Activated CD8-positive, alpha-beta memory T cell treated with anti-CD3 and anti-CD28 coated beads, Interleukin-2, amount 10 ng/mL, durations not matched to agents 7 days and 5 days (primary cell): ENCODE measurements at regions of chr4 and their contacts with region 1.

Region 1: DNA sequence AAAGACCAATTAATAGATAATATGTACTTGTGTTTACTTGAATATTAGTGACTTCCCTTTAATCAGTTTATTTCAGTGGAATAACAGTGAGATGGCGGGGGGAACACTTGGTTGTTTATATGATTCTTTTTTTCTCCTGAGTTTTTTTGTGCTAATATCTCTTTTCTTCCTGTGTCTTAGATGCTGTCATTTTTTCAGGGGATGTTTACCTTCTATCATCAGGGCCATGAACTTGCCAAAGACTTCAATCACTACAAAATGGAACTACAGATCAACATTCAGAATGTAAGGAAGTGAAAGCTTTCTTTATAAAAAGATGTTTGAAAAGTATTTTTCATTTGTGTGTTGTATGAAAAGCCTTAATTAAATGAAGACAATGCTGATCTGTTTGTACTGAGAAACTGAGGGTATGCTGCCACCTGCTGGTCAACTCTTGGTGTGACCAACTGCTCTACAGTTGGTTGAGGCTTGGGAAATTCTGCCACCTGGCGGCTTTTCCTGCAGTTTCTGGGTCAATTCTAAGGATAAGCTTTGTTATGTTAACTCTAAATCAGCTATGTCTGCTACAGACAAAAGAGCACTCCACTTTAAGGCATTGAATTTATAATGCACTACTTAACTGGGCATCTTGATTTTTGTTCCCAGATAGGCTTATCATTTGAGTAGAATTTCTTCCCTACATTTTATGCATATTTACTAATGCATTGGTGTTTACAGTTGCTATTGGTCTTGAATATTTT is 134.8 kb downstream of the ARHGAP10 start:
- DNase-seq: peak; percentile 95
- ATAC-seq: peak; percentile 99
- H3K4me3 Mint-ChIP-seq: no peak overlapping the region
- H3K27ac Mint-ChIP-seq: no peak overlapping the region
- H3K4me1 Mint-ChIP-seq: peaks cover 10% of the 10 kb centered on the region
- H3K27me3 Mint-ChIP-seq: no peaks in the 10 kb centered on the region

Region 2: GRCh38 chr4:147518846-147519767 is 347.6 kb before region 1 on chr4:
- CTCF ChIA-PET with region 1: interaction called, 27 read pairs
- DNase-seq: peak; percentile 72
- ATAC-seq: peak; percentile 53
- H3K4me3 Mint-ChIP-seq: no peak overlapping the region
- H3K27ac Mint-ChIP-seq: no peak overlapping the region
- H3K4me1 Mint-ChIP-seq: no peaks in the 10 kb centered on the region
- H3K27me3 Mint-ChIP-seq: peaks cover 17% of the 10 kb centered on the region

Region 3: GRCh38 chr4:147625733-147626132 is 241.0 kb before region 1 on chr4:
- CTCF ChIA-PET with region 1: interaction called, 13 read pairs
- DNase-seq: no peak
- ATAC-seq: no peak
- H3K4me3 Mint-ChIP-seq: no peak overlapping the region
- H3K27ac Mint-ChIP-seq: no peak overlapping the region
- H3K4me1 Mint-ChIP-seq: peaks cover 9% of the 10 kb centered on the region
- H3K27me3 Mint-ChIP-seq: no peaks in the 10 kb centered on the region

Region 4: DNA sequence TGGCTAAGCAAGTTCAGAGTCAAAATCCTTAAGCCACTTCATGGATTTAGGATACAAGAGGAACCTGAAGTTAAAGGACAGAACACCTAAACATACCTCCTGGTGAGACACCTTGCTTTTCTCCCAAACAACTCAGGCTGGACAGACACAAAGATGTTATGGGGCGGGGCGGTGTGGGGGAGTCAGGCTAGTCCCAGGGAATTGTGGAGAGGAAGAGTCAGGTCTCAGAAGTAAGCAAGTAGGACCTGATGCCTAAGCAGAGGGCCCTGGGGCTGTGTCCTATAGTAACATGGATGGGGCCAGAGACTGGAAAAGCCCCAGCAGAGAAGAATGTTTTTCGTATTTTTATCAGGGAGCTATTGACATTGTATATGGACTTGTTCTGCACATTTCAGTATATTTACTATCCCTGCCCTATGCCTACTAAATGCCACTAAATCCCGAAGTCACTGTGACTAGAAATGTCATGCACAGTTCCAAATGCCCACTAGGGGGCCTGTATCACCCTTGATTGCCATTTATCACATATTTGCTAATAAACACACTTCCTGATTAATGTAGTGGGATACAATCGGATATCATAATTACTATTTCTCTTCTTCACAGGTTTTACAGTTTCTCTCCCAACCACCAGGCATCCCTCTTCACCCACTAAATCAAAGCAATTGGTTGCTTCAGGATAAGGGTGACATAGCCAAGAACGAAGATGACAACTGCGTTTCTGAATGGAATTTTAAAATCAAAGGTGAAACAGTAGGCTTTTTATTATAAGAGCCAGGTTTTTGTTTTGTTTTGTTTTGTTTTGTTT is 158.6 kb before region 1 on chr4:
- CTCF ChIA-PET with region 1: interaction called, 82 read pairs
- DNase-seq: peak; percentile 53
- ATAC-seq: peak; percentile 72
- H3K4me3 Mint-ChIP-seq: no peak overlapping the region
- H3K27ac Mint-ChIP-seq: no peak overlapping the region
- H3K4me1 Mint-ChIP-seq: peaks cover 17% of the 10 kb centered on the region
- H3K27me3 Mint-ChIP-seq: peaks cover 13% of the 10 kb centered on the region

Region 5: DNA sequence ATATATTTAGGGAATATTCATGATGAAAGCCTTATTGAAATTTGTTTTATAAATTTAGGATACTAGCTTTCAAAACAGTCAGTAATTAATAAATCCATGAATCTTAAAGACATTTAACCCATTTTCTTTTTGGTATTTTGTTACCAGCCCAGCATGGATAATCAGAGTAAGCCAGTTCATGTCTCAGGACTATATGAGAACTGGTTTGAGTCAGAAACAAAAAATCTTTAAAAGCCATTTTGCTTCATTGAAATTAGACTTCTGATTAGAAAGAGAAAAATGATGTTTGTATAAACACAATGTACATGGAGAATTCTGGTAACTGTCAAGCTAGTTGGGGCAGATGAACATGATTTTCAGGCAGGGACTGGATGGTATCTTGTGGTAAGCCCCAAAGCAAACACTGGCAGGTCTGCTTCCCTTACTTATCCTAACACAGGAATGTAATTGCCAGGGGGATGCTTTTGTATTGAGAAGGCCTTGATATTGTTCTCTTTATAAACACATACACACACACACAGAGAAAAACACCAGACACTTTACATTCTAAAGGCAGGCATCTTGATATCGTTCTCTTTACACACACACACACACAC is 125.4 kb before region 1 on chr4:
- CTCF ChIA-PET with region 1: interaction called, 13 read pairs
- DNase-seq: no peak
- ATAC-seq: no peak
- H3K4me3 Mint-ChIP-seq: no peak overlapping the region
- H3K27ac Mint-ChIP-seq: peak overlapping the region; percentile 55
- H3K4me1 Mint-ChIP-seq: peaks cover 39% of the 10 kb centered on the region
- H3K27me3 Mint-ChIP-seq: no peaks in the 10 kb centered on the region

Region 6: GRCh38 chr4:147846318-147847155 is 20.2 kb before region 1 on chr4:
- CTCF ChIA-PET with region 1: interaction called, 30 read pairs
- DNase-seq: peak; percentile 49
- ATAC-seq: peak; percentile 51
- H3K4me3 Mint-ChIP-seq: no peak overlapping the region
- H3K27ac Mint-ChIP-seq: no peak overlapping the region
- H3K4me1 Mint-ChIP-seq: no peaks in the 10 kb centered on the region
- H3K27me3 Mint-ChIP-seq: no peaks in the 10 kb centered on the region